MCF 10A (cell line): ENCODE measurements at regions of chr6 and their contacts with region 1.

Region 1: GRCh38 chr6:89066940-89067646 is 13.5 kb upstream of the PNRC1 start:
- DNase-seq: no peak
- H3K4me3 Mint-ChIP-seq: no peak overlapping the region
- H3K27ac Mint-ChIP-seq: no peak overlapping the region
- H3K4me1 Mint-ChIP-seq: peaks cover 12% of the 10 kb centered on the region
- H3K27me3 Mint-ChIP-seq: no peaks in the 10 kb centered on the region
- CTCF ChIP-seq: no peak

Region 2: GRCh38 chr6:88922775-88923548 is 144.1 kb before region 1 on chr6:
- CTCF ChIA-PET with region 1: no interaction called
- POLR2A ChIA-PET with region 1: no interaction called
- intact Hi-C with region 1: no loop called
- DNase-seq: no peak
- H3K4me3 Mint-ChIP-seq: no peak overlapping the region
- H3K27ac Mint-ChIP-seq: no peak overlapping the region
- H3K4me1 Mint-ChIP-seq: no peaks in the 10 kb centered on the region
- H3K27me3 Mint-ChIP-seq: no peaks in the 10 kb centered on the region
- CTCF ChIP-seq: no peak

Region 3: DNA sequence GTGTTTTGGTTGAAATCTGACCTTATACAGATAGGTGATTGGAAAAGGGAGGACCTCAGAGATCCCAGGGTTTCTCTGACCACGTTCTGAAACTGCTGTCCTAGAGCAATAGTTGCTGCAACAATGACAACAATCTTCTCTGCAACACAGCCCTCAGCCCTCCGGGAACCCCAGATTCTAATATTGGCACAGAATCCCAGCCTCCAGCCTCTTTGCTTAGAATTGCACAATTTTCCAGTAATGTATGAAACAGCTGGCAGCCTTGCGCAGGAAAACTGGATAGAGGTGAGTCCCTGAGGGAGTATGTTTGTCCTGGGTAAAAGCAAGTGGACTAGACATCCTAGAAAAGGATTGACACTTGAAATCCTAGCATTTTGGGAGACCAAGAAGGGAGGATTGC is 16.9 kb before region 1 on chr6:
- CTCF ChIA-PET with region 1: interaction called, 4 read pairs
- POLR2A ChIA-PET with region 1: interaction called, 29 read pairs
- intact Hi-C with region 1: no loop called
- DNase-seq: peak; percentile 95
- H3K4me3 Mint-ChIP-seq: peak overlapping the region; percentile 45
- H3K27ac Mint-ChIP-seq: peak overlapping the region; percentile 77
- H3K4me1 Mint-ChIP-seq: peaks cover 28% of the 10 kb centered on the region
- H3K27me3 Mint-ChIP-seq: no peaks in the 10 kb centered on the region
- CTCF ChIP-seq: no peak